ENCODE measurements at regions of chrX and their contacts with region 1.

Region 1: GRCh38 chrX:119004920-119005524 is 30.6 kb downstream of the LONRF3 start:
- DNase-seq: peak; percentile 51 to 75 (median 72)
- ATAC-seq: peak; percentile 47 to 85
- H3K4me3 ChIP-seq: no peak overlapping the region
- H3K27ac ChIP-seq: no peak overlapping the region
- H3K4me1 ChIP-seq: no peaks in the 10 kb centered on the region
- H3K27me3 ChIP-seq: no peaks in the 10 kb centered on the region

Region 2: DNA sequence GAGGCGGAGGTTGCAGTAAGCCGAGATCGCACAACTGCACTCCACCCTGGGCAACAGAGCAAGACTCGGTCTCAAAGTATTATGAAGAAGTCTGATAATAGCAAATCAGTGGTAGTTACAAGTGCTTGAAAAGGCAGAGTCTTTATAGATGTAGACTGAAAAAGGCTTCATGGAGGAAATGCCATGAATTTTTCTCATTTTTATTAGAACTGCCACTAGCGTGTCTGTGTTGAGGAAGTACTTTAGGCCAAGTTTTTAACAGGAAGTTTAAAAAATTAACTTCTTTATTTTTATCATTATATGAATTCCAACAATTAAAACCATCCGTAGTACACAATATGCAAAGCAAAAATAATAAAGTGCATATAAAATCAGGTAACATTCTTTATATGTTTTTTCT is 310.4 kb before region 1 on chrX:
- intact Hi-C with region 1: no loop called
- DNase-seq: no peak
- ATAC-seq: no peak
- H3K4me3 ChIP-seq: no peak overlapping the region
- H3K27ac ChIP-seq: no peak overlapping the region
- H3K4me1 ChIP-seq: no peaks in the 10 kb centered on the region
- H3K27me3 ChIP-seq: no peaks in the 10 kb centered on the region

Region 3: GRCh38 chrX:118847676-118848075 is 157.3 kb before region 1 on chrX:
- intact Hi-C with region 1: loop called in 1 of 4 experiments (anchors 10 kb)
- DNase-seq: no peak
- ATAC-seq: peak in 1 of 2 donors; percentile 59
- H3K4me3 ChIP-seq: no peak overlapping the region
- H3K27ac ChIP-seq: no peak overlapping the region
- H3K4me1 ChIP-seq: no peaks in the 10 kb centered on the region
- H3K27me3 ChIP-seq: no peaks in the 10 kb centered on the region

Region 4: DNA sequence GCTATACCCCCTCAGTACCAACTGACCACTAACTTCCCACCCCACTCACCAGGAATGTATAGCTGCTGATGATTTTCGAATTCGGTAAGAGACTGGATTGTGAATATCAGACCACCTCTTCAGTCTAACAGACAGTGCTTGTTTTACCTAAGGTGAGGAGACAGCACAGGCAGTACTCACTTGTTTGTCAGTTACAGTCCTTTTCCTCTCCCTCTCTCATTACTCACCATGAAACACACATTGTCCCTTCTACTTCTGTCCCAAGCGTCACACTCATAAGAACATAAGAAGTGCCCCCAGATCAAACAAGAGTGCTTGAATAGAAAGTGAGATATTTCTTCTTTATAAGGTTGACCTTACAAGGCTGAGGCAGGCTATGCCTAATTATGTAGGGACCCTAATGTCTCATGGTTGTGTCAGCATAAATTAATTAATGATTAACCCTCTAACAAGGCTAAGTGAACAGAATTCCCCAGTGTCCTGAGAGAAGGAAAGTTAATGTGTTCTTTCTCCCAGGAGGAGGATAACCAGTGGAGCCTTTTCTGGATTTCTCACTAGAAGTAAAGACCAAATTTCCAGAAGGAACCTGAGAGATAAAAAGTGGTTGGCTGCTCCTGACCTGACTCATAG is 149.2 kb before region 1 on chrX:
- intact Hi-C with region 1: loop called in 1 of 4 experiments (anchors 5 kb)
- DNase-seq: no peak
- ATAC-seq: no peak
- H3K4me3 ChIP-seq: no peak overlapping the region
- H3K27ac ChIP-seq: no peak overlapping the region
- H3K4me1 ChIP-seq: no peaks in the 10 kb centered on the region
- H3K27me3 ChIP-seq: no peaks in the 10 kb centered on the region

Region 5: GRCh38 chrX:119067023-119067739 is 62.2 kb after region 1 on chrX:
- intact Hi-C with region 1: loop called in 3 of 4 experiments (anchors 5 kb)
- DNase-seq: peak; percentile 52 to 80 (median 75)
- ATAC-seq: peak; percentile 67 to 71
- H3K4me3 ChIP-seq: no peak overlapping the region
- H3K27ac ChIP-seq: no peak overlapping the region
- H3K4me1 ChIP-seq: no peaks in the 10 kb centered on the region
- H3K27me3 ChIP-seq: no peaks in the 10 kb centered on the region